Caco-2 (cell line): ENCODE measurements at regions of chr2 and their contacts with region 1.

Region 1: DNA sequence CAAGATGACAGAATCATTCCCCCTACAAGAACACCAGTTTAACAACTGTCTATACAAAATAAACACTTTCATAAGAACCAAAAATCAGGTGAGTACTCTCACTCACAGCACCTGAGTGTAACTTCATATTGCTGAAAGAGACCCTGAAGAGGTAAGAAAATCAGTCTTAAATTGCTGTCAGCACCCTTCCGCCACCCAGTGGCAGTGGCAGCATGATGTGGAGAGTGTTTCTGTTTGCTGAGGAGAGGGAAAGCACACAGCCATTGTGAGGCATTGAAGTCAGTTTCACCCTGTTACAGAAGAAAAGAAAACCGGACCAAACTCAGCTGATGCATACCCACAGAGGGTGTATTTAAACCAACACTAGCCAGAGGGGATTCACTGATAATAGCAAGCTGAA is 1240.8 kb upstream of the CRIM1 start:
- DNase-seq: peak in 1 of 2 experiments; percentile 26
- H3K4me3 ChIP-seq: no peak overlapping the region
- H3K4me3 Mint-ChIP-seq: no peak overlapping the region
- H3K27ac Mint-ChIP-seq: no peak overlapping the region
- H3K4me1 ChIP-seq: no peaks in the 10 kb centered on the region
- H3K4me1 Mint-ChIP-seq: no peaks in the 10 kb centered on the region
- H3K27me3 ChIP-seq: no peaks in the 10 kb centered on the region
- H3K27me3 Mint-ChIP-seq: peaks cover 5% of the 10 kb centered on the region
- CTCF ChIP-seq: peak in 1 of 2 experiments; percentile 45

Region 2: GRCh38 chr2:33673937-33674336 is 1440.8 kb before region 1 on chr2:
- CTCF ChIA-PET with region 1: no interaction called
- POLR2A ChIA-PET with region 1: no interaction called
- intact Hi-C with region 1: loop called (anchors 10 kb)
- DNase-seq: no peak
- H3K4me3 ChIP-seq: no peak overlapping the region
- H3K4me3 Mint-ChIP-seq: no peak overlapping the region
- H3K27ac Mint-ChIP-seq: no peak overlapping the region
- H3K4me1 ChIP-seq: no peaks in the 10 kb centered on the region
- H3K4me1 Mint-ChIP-seq: no peaks in the 10 kb centered on the region
- H3K27me3 ChIP-seq: no peaks in the 10 kb centered on the region
- H3K27me3 Mint-ChIP-seq: peaks cover 7% of the 10 kb centered on the region
- CTCF ChIP-seq: no peak

Region 3: DNA sequence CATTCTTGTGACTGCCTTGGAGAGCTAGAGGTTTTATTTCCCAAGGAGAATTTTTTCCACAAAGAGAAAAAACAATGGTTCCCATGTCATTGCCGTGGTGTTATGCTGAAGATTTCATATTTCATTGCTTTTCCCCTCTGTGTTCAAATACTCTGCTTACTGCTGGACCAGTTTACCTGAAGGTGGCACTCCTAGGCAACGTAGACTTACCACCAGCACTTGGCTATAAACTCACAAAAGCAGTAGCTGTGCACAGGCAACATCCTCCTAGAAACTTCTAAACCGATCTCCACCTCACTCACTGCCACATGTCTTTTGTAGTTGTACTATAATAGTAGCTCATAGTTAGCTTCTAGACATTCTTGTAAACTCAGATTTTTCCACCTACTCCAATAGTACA is 78.9 kb before region 1 on chr2:
- CTCF ChIA-PET with region 1: no interaction called
- POLR2A ChIA-PET with region 1: no interaction called
- intact Hi-C with region 1: loop called (anchors 1 kb)
- DNase-seq: peak in 1 of 2 experiments; percentile 13
- H3K4me3 ChIP-seq: no peak overlapping the region
- H3K4me3 Mint-ChIP-seq: no peak overlapping the region
- H3K27ac Mint-ChIP-seq: no peak overlapping the region
- H3K4me1 ChIP-seq: no peaks in the 10 kb centered on the region
- H3K4me1 Mint-ChIP-seq: no peaks in the 10 kb centered on the region
- H3K27me3 ChIP-seq: no peaks in the 10 kb centered on the region
- H3K27me3 Mint-ChIP-seq: peaks cover 5% of the 10 kb centered on the region
- CTCF ChIP-seq: peak; percentile 22 to 26

Region 4: GRCh38 chr2:35783725-35784124 is 669.0 kb after region 1 on chr2:
- CTCF ChIA-PET with region 1: no interaction called
- POLR2A ChIA-PET with region 1: no interaction called
- intact Hi-C with region 1: no loop called
- DNase-seq: peak; percentile 35 to 54
- H3K4me3 ChIP-seq: no peak overlapping the region
- H3K4me3 Mint-ChIP-seq: no peak overlapping the region
- H3K27ac Mint-ChIP-seq: no peak overlapping the region
- H3K4me1 ChIP-seq: no peaks in the 10 kb centered on the region
- H3K4me1 Mint-ChIP-seq: no peaks in the 10 kb centered on the region
- H3K27me3 ChIP-seq: no peaks in the 10 kb centered on the region
- H3K27me3 Mint-ChIP-seq: no peaks in the 10 kb centered on the region
- CTCF ChIP-seq: no peak